Activated CD4-positive, alpha-beta T cell treated with anti-CD3 and anti-CD28 coated beads, Interleukin-2, amount 10 ng/mL, durations not matched to agents 7 days and 5 days (primary cell): ENCODE measurements at regions of chr1 and their contacts with region 1.

Region 1: GRCh38 chr1:29181413-29182225 is at the start of gene SRSF4:
- DNase-seq: peak; percentile 99
- H3K4me3 Mint-ChIP-seq: peak within 1 kb of the TSS; percentile 96
- H3K27ac Mint-ChIP-seq: peak within 1 kb of the TSS; percentile 97
- H3K4me1 Mint-ChIP-seq: peaks cover 45% of the 10 kb centered on the region
- H3K27me3 Mint-ChIP-seq: no peaks in the 10 kb centered on the region
- total RNA-seq, gene SRSF4: 116 to 123 TPM

Region 2: GRCh38 chr1:29197585-29197924 is 15.9 kb after region 1 on chr1:
- CTCF ChIA-PET with region 1: interaction called, 38 read pairs
- POLR2A ChIA-PET with region 1: interaction called, 6 read pairs
- DNase-seq: peak; percentile 64
- H3K4me3 Mint-ChIP-seq: no peak overlapping the region
- H3K27ac Mint-ChIP-seq: no peak overlapping the region
- H3K4me1 Mint-ChIP-seq: peaks cover 12% of the 10 kb centered on the region
- H3K27me3 Mint-ChIP-seq: no peaks in the 10 kb centered on the region

Region 3: DNA sequence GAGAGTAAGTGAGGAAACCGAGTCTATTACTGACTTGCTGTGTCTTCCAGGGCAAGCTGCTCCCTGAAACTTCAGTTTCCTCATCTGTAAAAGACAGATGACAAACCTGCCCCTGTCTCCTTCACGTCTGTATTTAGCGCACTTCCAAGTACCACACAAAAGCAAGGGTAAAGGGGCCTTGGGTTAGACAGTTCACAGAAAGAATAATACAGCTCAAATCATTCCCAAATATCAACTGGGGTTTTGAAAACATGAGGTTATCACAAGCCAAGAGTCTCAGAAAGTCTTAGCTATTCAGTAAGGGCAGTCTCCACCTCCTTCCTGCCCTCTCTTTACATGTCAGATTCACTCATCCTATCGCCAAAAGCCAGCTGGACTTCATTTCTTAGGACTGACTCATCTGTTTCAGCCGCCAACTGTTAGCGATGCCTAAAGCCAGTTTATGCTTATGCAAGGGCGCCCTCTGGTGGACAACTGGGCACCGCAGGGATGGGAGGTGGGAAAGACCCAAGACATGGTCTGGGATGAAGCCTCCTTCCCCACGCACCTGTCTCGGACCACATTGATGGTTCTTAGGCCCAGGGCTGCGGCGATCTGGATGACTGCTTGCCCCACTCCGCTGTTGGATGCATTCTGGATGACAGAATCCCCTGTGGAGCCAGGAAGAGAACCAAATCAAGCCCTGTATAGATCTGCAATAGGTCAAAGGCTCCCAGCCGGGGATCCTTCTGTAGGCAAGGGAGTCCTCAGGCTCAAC is 21.1 kb after region 1 on chr1:
- CTCF ChIA-PET with region 1: interaction called, 38 read pairs
- POLR2A ChIA-PET with region 1: interaction called, 6 read pairs
- DNase-seq: peak; percentile 92
- H3K4me3 Mint-ChIP-seq: no peak overlapping the region
- H3K27ac Mint-ChIP-seq: no peak overlapping the region
- H3K4me1 Mint-ChIP-seq: peaks cover 12% of the 10 kb centered on the region
- H3K27me3 Mint-ChIP-seq: no peaks in the 10 kb centered on the region